Activated naive CD4-positive, alpha-beta T cell treated with anti-CD3 and anti-CD28 coated beads for 36 hours (primary cell): ENCODE measurements at regions of chr15 and their contacts with region 1.

Region 1: GRCh38 chr15:64355944-64356709 is at the start of gene CSNK1G1:
- DNase-seq: peak; percentile 88
- H3K4me3 Mint-ChIP-seq: peak within 1 kb of the TSS; percentile 89
- H3K27ac Mint-ChIP-seq: peak within 1 kb of the TSS; percentile 74
- H3K4me1 Mint-ChIP-seq: peaks cover 17% of the 10 kb centered on the region
- H3K27me3 Mint-ChIP-seq: no peaks in the 10 kb centered on the region
- total RNA-seq, gene CSNK1G1: 14.8 to 16.6 TPM

Region 2: DNA sequence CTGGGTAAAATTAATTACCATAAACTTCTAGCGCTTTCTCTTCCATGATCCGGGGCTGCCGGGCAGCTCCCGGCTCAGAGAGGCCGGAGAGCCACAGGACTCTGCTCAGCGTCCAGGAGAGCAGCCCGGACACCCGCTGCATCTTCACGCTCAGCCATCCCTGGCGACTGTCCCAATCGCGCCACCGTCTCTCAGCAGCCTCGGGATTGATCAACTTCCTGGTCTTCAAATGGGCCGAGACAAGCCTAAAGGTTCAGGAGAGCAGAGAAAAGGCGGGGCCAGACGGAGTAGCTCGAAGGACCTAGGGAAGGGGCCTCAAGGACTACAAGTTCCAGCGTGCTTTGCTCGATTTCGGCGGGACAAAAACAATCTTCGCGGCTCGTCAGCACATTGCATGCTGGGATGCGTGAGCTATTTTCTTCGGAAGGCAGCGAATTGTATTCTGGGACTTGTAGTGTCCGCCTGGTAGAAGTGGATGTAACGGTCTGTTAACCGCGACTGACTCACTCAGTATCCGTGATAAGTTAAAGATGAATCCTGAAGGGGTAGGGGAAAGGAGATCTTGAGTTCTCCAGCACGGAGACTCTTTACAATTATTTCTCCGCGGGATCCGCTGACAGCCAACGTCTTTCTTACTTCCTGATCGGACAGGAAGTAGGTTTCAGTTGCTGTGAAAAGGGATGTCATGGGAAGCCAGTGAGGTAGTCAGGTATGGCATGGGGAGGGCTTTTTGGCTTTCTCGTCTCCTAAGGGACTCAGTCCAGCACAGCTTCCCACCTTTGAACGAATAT is 262.3 kb before region 1 on chr15 and contains the start of gene CIAO2A:
- CTCF ChIA-PET with region 1: no interaction called
- intact Hi-C with region 1: loop called (anchors 10 kb)
- DNase-seq: peak; percentile 99
- H3K4me3 Mint-ChIP-seq: peak within 1 kb of the TSS; percentile 98
- H3K27ac Mint-ChIP-seq: peak within 1 kb of the TSS; percentile 97
- H3K4me1 Mint-ChIP-seq: peaks cover 62% of the 10 kb centered on the region
- H3K27me3 Mint-ChIP-seq: no peaks in the 10 kb centered on the region
- total RNA-seq, gene CIAO2A: 105 TPM

Region 3: GRCh38 chr15:64209680-64210334 is 146.3 kb before region 1 on chr15:
- CTCF ChIA-PET with region 1: no interaction called
- intact Hi-C with region 1: loop called (anchors 1 kb)
- DNase-seq: peak; percentile 8
- H3K4me3 Mint-ChIP-seq: no peak overlapping the region
- H3K27ac Mint-ChIP-seq: no peak overlapping the region
- H3K4me1 Mint-ChIP-seq: peaks cover 3% of the 10 kb centered on the region
- H3K27me3 Mint-ChIP-seq: no peaks in the 10 kb centered on the region

Region 4: DNA sequence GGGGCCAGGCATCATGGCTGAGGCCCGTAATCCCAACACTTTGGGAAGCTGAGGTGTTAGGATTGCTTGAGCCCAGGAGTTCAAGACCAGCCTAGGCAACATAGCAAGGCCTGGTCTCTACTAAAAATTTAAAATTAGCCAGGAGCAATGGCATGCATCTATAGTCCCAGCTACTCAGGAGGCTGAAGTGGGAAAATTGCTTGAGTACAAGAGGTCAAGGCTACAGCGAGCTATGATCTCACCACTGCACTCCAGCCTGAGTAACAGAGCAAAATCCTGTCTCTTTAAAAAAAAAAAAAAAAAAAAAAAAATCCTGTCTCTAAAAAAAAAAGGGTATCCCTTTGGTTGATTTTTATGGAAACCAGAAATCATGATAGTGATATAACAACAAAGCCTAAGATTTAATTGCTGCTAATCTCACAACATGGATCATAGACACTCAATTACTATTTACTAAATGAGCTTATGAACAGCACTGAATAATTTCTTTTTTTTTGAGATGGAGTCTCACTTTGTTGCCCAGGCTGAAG is 13.0 kb after region 1 on chr15:
- CTCF ChIA-PET with region 1: no interaction called
- intact Hi-C with region 1: no loop called
- DNase-seq: no peak
- H3K4me3 Mint-ChIP-seq: no peak overlapping the region
- H3K27ac Mint-ChIP-seq: no peak overlapping the region
- H3K4me1 Mint-ChIP-seq: no peaks in the 10 kb centered on the region
- H3K27me3 Mint-ChIP-seq: no peaks in the 10 kb centered on the region

Region 5: GRCh38 chr15:64381000-64381752 is 25.0 kb after region 1 on chr15 and contains the start of gene PCLAF:
- CTCF ChIA-PET with region 1: interaction called, 3 read pairs
- intact Hi-C with region 1: loop called (anchors 1 kb)
- DNase-seq: peak; percentile 97
- H3K4me3 Mint-ChIP-seq: peak within 1 kb of the TSS; percentile 99
- H3K27ac Mint-ChIP-seq: peak within 1 kb of the TSS; percentile 92
- H3K4me1 Mint-ChIP-seq: peaks cover 19% of the 10 kb centered on the region
- H3K27me3 Mint-ChIP-seq: no peaks in the 10 kb centered on the region
- total RNA-seq, gene PCLAF: 117 to 118 TPM

Region 6: GRCh38 chr15:64387562-64388168 is 31.5 kb after region 1 on chr15 and contains the start of gene TRIP4:
- CTCF ChIA-PET with region 1: interaction called, 3 read pairs
- intact Hi-C with region 1: loop called (anchors 1 kb)
- DNase-seq: peak; percentile 98
- H3K4me3 Mint-ChIP-seq: peak within 1 kb of the TSS; percentile 94
- H3K27ac Mint-ChIP-seq: peak within 1 kb of the TSS; percentile 78
- H3K4me1 Mint-ChIP-seq: peaks cover 15% of the 10 kb centered on the region
- H3K27me3 Mint-ChIP-seq: no peaks in the 10 kb centered on the region
- total RNA-seq, gene TRIP4: 13.7 to 14.5 TPM

Region 7: GRCh38 chr15:64460206-64460734 is 104.1 kb after region 1 on chr15 and contains the start of gene ZNF609:
- CTCF ChIA-PET with region 1: no interaction called
- intact Hi-C with region 1: no loop called
- DNase-seq: peak; percentile 94
- H3K4me3 Mint-ChIP-seq: peak within 1 kb of the TSS; percentile 85
- H3K27ac Mint-ChIP-seq: peak within 1 kb of the TSS; percentile 82
- H3K4me1 Mint-ChIP-seq: peaks cover 77% of the 10 kb centered on the region
- H3K27me3 Mint-ChIP-seq: no peaks in the 10 kb centered on the region
- total RNA-seq, gene ZNF609: 39.5 to 40.4 TPM